Mammary epithelial cell (primary cell): ENCODE measurements at regions of chr2 and their contacts with region 1.

Region 1: GRCh38 chr2:158128168-158128973 is 26.7 kb downstream of the UPP2 start:
- DNase-seq: no peak
- H3K4me3 ChIP-seq: no peak overlapping the region
- H3K27ac ChIP-seq: no peak overlapping the region
- H3K4me1 ChIP-seq: no peaks in the 10 kb centered on the region
- H3K27me3 ChIP-seq: no peaks in the 10 kb centered on the region
- CTCF ChIP-seq: no peak

Region 2: GRCh38 chr2:158066046-158066713 is 62.2 kb before region 1 on chr2:
- CTCF ChIA-PET with region 1: no interaction called
- dilution Hi-C with region 1: loop called (anchors 5 kb)
- in situ Hi-C with region 1: no loop called
- intact Hi-C with region 1: no loop called
- DNase-seq: no peak
- H3K4me3 ChIP-seq: no peak overlapping the region
- H3K27ac ChIP-seq: no peak overlapping the region
- H3K4me1 ChIP-seq: no peaks in the 10 kb centered on the region
- H3K27me3 ChIP-seq: peaks cover 3% of the 10 kb centered on the region
- CTCF ChIP-seq: no peak